ENCODE measurements at regions of chr17 and their contacts with region 1.

Region 1: GRCh38 chr17:80981062-80981902 is 10.4 kb upstream of the CHMP6 start:
- DNase-seq: peak in 1 of 2 donors; percentile 24
- ATAC-seq: peak in 4 of 8 donors; percentile 32 to 49 (median 39)
- H3K4me3 ChIP-seq: peak overlapping the region in 3 of 10 donors; percentile 18 to 35 (median 22)
- H3K27ac ChIP-seq: no peak overlapping the region
- H3K4me1 ChIP-seq: peaks cover 3 to 21% (median 15%) of the 10 kb centered on the region in 9 donors
- H3K27me3 ChIP-seq: peaks cover 0 to 27% (median 18%) of the 10 kb centered on the region in 7 donors
- CTCF ChIP-seq: peak; percentile 74 to 92 (median 83)

Region 2: GRCh38 chr17:80866147-80866793 is 115.0 kb before region 1 on chr17:
- intact Hi-C with region 1: loop called in 6 of 10 experiments (anchors 2 to 5 kb)
- DNase-seq: peak; percentile 63 to 75
- ATAC-seq: peak in 6 of 8 donors; percentile 54 to 80 (median 70)
- H3K4me3 ChIP-seq: no peak overlapping the region
- H3K27ac ChIP-seq: no peak overlapping the region
- H3K4me1 ChIP-seq: peaks cover 0 to 23% (median 3%) of the 10 kb centered on the region in 9 donors
- H3K27me3 ChIP-seq: no peaks in the 10 kb centered on the region
- CTCF ChIP-seq: peak; percentile 55 to 86 (median 77)

Region 3: DNA sequence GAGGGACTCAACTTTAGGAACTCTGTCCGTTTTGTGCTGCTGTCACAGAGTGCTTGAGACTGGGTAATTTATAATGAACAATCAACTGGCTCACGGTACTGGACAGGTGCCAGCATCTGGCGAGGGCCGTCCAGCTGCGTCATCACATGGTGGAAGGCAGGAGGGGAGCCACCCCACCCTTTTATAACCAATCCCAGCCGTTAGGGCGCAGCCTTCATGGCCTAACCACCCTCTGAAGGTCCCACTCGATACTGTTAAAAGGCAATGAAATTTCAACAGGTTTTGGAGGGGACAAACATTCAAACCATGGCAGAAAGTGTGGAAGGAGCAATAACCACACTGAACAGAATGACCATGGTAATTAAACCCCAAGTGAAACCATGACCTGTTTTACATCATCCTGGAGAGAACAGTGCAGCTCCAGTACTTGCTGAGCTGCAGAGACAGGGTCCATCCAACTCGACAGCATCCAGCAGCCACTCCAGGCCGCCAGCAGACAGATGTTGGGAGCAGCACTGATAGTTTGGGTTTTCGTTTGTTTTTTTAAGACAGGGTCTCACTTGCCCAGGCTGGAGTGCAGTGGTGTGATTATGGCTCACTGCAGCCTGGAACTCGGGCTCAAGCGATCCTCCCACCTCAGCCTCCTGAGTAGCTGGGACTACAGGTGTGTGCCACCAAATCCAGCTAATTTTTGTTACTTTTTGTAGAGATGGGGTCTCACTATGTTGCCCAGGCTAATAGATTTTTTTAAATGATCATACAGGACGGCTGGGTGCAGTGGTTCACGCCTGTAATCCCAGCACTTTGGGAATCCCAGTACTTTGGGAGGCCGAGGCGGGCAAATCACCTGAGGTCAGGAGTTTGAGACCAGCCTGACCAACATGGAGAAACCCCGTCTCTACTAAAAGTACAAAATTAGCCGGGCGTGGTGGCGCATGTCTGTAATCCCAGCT is 21.4 kb after region 1 on chr17:
- intact Hi-C with region 1: no loop called
- DNase-seq: peak; percentile 72 to 74
- ATAC-seq: peak; percentile 19 to 72 (median 53)
- H3K4me3 ChIP-seq: no peak overlapping the region
- H3K27ac ChIP-seq: no peak overlapping the region
- H3K4me1 ChIP-seq: peaks cover 16 to 41% (median 32%) of the 10 kb centered on the region in 9 donors
- H3K27me3 ChIP-seq: peaks cover 8 to 48% (median 25%) of the 10 kb centered on the region in 7 donors
- CTCF ChIP-seq: no peak

Region 4: DNA sequence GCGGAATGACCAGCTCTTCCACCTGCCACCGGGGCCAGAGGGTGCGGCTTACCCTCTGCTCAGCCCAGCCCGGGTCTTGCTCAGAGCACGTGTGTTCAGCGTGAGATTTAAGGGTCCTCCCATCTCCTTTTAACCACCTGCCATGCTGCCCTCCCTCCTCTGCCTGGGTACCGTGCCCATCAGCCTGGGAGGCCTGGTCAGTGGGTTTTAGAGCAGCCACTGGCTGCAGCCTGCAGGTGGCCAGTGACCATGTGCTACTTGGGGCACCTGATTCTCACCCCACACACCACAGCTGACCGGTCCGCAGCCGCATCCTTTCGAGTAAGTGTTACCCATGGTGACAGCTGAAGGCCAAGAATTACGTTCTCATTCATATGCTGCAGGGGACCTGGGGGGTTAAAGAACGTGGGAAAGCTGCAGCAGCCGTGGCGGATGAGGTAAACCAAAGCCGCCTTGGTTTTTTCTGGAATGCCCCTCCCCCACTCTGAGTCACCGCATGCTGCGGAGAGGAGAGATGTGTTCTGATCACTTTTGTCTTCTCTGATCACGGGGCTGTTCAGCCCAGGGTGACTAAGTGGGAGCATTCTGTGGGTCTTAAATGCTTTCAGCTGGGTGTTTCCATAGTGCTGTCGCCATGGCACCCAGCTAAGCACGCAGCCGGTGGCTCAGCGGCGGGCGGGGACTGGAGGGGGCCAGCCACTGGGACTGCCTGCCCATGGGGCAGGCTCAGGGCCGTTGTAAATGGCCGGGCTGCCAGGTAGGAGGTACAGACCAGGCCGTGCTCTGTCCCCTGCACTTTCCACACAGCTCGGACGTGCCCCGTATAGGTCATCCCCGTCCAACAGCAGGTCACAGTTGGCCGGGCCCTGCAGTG is 113.5 kb after region 1 on chr17:
- intact Hi-C with region 1: loop called in 1 of 10 experiments (anchors 5 kb)
- DNase-seq: peak in 1 of 2 donors; percentile 57
- ATAC-seq: peak in 6 of 8 donors; percentile 10 to 50 (median 42)
- H3K4me3 ChIP-seq: no peak overlapping the region
- H3K27ac ChIP-seq: peak overlapping the region in 1 of 10 donors; percentile 64
- H3K4me1 ChIP-seq: peaks cover 5 to 55% (median 11%) of the 10 kb centered on the region in 9 donors
- H3K27me3 ChIP-seq: no peaks in the 10 kb centered on the region
- CTCF ChIP-seq: no peak

Region 5: GRCh38 chr17:81101614-81102306 is 120.5 kb after region 1 on chr17:
- intact Hi-C with region 1: loop called in 2 of 10 experiments (anchors 5 to 10 kb)
- DNase-seq: peak; percentile 73 to 84
- ATAC-seq: peak; percentile 72 to 90 (median 85)
- H3K4me3 ChIP-seq: no peak overlapping the region
- H3K27ac ChIP-seq: no peak overlapping the region
- H3K4me1 ChIP-seq: peaks cover 0 to 25% (median 18%) of the 10 kb centered on the region in 9 donors
- H3K27me3 ChIP-seq: no peaks in the 10 kb centered on the region
- CTCF ChIP-seq: peak; percentile 99 to 100 (median 100)